ENCODE measurements at regions of chr11 and their contacts with region 1.

Region 1: DNA sequence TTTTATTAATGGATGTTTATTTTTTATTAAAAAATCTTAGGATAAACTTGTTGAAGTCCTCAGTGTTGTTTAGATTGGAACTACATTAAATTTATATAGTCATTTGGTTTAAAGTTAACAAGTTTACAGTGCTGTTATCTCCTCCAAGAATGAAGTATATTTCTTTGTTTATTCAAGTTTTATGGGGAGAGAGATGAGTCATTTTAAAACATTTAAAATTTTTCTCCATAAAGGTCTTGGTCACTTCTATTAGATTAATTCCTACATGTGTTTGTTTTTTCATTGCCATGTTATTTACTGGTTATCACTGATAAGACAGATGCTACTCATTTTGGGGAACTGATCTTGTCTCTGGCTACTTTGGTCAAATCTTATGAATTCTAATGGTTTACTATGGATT is 429.6 kb downstream of the METTL15 start:
- DNase-seq: peak; percentile 71
- ATAC-seq: peak; percentile 65
- H3K4me3 ChIP-seq: no peak overlapping the region
- H3K27ac ChIP-seq: peak overlapping the region; percentile 43
- H3K4me1 ChIP-seq: peaks cover 27% of the 10 kb centered on the region
- H3K27me3 ChIP-seq: no peaks in the 10 kb centered on the region
- CTCF ChIP-seq: no peak

Region 2: GRCh38 chr11:28168718-28169117 is 369.1 kb before region 1 on chr11:
- CTCF ChIA-PET with region 1: no interaction called
- POLR2A ChIA-PET with region 1: no interaction called
- intact Hi-C with region 1: no loop called
- DNase-seq: no peak
- ATAC-seq: no peak
- H3K4me3 ChIP-seq: no peak overlapping the region
- H3K27ac ChIP-seq: no peak overlapping the region
- H3K4me1 ChIP-seq: no peaks in the 10 kb centered on the region
- H3K27me3 ChIP-seq: no peaks in the 10 kb centered on the region
- CTCF ChIP-seq: no peak

Region 3: GRCh38 chr11:28464252-28464867 is 73.5 kb before region 1 on chr11:
- CTCF ChIA-PET with region 1: no interaction called
- POLR2A ChIA-PET with region 1: no interaction called
- intact Hi-C with region 1: loop called (anchors 5 kb)
- DNase-seq: no peak
- ATAC-seq: no peak
- H3K4me3 ChIP-seq: no peak overlapping the region
- H3K27ac ChIP-seq: no peak overlapping the region
- H3K4me1 ChIP-seq: peaks cover 27% of the 10 kb centered on the region
- H3K27me3 ChIP-seq: no peaks in the 10 kb centered on the region
- CTCF ChIP-seq: no peak

Region 4: DNA sequence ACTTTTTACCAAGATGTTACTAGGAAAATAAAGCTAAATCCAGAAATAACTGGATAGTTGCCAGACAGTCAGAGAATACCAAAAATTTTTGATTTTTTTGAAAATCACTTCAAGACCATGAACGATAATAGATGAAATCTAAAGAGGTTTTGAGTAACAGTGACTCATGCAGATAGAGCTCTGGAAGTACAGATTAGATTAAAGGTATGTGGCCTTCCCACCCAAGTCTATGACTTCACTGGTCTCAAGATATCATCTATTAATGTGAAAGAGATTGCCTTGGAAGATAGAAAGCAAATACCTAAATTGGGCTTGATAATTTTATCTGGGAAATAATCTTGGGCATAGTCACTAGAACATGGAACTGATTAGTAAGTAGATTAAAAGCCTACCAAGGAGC is 13.7 kb before region 1 on chr11:
- CTCF ChIA-PET with region 1: no interaction called
- POLR2A ChIA-PET with region 1: no interaction called
- intact Hi-C with region 1: no loop called
- DNase-seq: peak; percentile 22
- ATAC-seq: no peak
- H3K4me3 ChIP-seq: no peak overlapping the region
- H3K27ac ChIP-seq: no peak overlapping the region
- H3K4me1 ChIP-seq: no peaks in the 10 kb centered on the region
- H3K27me3 ChIP-seq: no peaks in the 10 kb centered on the region
- CTCF ChIP-seq: no peak

Region 5: GRCh38 chr11:28559488-28559887 is 21.7 kb after region 1 on chr11:
- CTCF ChIA-PET with region 1: no interaction called
- POLR2A ChIA-PET with region 1: no interaction called
- intact Hi-C with region 1: no loop called
- DNase-seq: no peak
- ATAC-seq: no peak
- H3K4me3 ChIP-seq: no peak overlapping the region
- H3K27ac ChIP-seq: no peak overlapping the region
- H3K4me1 ChIP-seq: no peaks in the 10 kb centered on the region
- H3K27me3 ChIP-seq: no peaks in the 10 kb centered on the region
- CTCF ChIP-seq: no peak

Region 6: GRCh38 chr11:28621753-28622152 is 83.9 kb after region 1 on chr11:
- CTCF ChIA-PET with region 1: no interaction called
- POLR2A ChIA-PET with region 1: no interaction called
- intact Hi-C with region 1: loop called (anchors 2 kb)
- DNase-seq: no peak
- ATAC-seq: no peak
- H3K4me3 ChIP-seq: no peak overlapping the region
- H3K27ac ChIP-seq: no peak overlapping the region
- H3K4me1 ChIP-seq: peaks cover 35% of the 10 kb centered on the region
- H3K27me3 ChIP-seq: no peaks in the 10 kb centered on the region
- CTCF ChIP-seq: no peak

Region 7: GRCh38 chr11:28632338-28632737 is 94.5 kb after region 1 on chr11:
- CTCF ChIA-PET with region 1: no interaction called
- POLR2A ChIA-PET with region 1: no interaction called
- intact Hi-C with region 1: loop called (anchors 5 kb)
- DNase-seq: peak; percentile 89
- ATAC-seq: peak; percentile 82
- H3K4me3 ChIP-seq: no peak overlapping the region; the same call in 1 of the 2 replicates
- H3K27ac ChIP-seq: peak overlapping the region; percentile 79
- H3K4me1 ChIP-seq: peaks cover 42% of the 10 kb centered on the region
- H3K27me3 ChIP-seq: no peaks in the 10 kb centered on the region
- CTCF ChIP-seq: no peak

Region 8: GRCh38 chr11:28756977-28757376 is 219.2 kb after region 1 on chr11:
- CTCF ChIA-PET with region 1: no interaction called
- POLR2A ChIA-PET with region 1: no interaction called
- intact Hi-C with region 1: loop called (anchors 5 kb)
- DNase-seq: peak; percentile 89
- ATAC-seq: peak; percentile 59
- H3K4me3 ChIP-seq: peak overlapping the region; percentile 16; the same call in 1 of the 2 replicates
- H3K27ac ChIP-seq: peak overlapping the region; percentile 79
- H3K4me1 ChIP-seq: peaks cover 66% of the 10 kb centered on the region
- H3K27me3 ChIP-seq: no peaks in the 10 kb centered on the region
- CTCF ChIP-seq: no peak